Right lobe of liver (tissue), 6 donors: ENCODE measurements at regions of chr5 and their contacts with region 1.

Region 1: DNA sequence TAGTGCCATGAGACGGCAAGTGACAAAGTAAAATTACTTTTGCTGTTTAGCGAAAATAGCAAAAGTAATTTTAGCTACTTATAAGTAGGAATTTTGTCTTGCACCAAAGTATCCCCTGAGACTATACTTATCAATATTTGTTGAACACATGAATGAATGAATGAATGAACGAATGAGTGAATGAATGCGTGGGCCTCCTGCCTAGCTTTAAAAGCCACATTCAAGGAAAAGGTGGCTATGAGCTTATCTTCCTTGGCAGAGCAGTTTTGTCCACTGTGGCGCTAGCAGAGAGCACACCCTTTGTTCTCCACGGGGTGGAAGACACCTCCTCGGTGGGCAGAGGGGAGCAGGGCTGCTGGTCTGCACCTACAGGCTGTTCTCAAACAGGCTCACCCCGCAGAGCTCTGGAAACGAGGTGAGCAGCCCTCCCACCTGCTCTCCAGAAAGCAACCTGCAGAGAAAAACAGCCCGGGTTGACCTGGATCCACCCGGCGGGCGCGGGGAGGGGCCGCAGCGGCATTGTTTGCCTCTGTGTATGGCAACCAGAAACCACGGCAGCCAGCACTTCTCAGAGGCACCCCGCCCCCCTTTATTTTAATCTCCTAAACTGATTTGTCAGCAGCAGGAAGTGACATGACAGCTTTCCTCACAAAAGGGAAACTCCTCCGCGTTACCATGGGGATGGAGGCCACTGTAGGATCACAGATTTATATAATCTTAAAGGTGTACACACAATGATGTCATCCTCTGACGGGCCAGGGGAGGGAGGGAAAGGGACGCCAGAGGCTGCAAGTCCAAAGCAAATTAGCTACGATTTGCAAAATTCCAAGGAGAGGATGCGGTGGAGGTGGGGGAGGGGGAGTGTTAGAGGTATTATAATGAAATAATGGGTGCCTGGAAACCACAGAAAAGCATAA is 5.9 kb downstream of the DUSP1 start:
- DNase-seq: peak; percentile 92 to 97 (median 95)
- ATAC-seq: peak; percentile 48 to 76 (median 56)
- H3K4me3 ChIP-seq: peak overlapping the region; percentile 22 to 43 (median 22)
- H3K27ac ChIP-seq: peak overlapping the region; percentile 99 to 100 (median 99)
- H3K4me1 ChIP-seq: peaks cover 0 to 43% (median 4%) of the 10 kb centered on the region in 4 donors
- H3K27me3 ChIP-seq: no peaks in the 10 kb centered on the region
- CTCF ChIP-seq: no peak
- POLR2A ChIP-seq: peak; percentile 48

Region 2: DNA sequence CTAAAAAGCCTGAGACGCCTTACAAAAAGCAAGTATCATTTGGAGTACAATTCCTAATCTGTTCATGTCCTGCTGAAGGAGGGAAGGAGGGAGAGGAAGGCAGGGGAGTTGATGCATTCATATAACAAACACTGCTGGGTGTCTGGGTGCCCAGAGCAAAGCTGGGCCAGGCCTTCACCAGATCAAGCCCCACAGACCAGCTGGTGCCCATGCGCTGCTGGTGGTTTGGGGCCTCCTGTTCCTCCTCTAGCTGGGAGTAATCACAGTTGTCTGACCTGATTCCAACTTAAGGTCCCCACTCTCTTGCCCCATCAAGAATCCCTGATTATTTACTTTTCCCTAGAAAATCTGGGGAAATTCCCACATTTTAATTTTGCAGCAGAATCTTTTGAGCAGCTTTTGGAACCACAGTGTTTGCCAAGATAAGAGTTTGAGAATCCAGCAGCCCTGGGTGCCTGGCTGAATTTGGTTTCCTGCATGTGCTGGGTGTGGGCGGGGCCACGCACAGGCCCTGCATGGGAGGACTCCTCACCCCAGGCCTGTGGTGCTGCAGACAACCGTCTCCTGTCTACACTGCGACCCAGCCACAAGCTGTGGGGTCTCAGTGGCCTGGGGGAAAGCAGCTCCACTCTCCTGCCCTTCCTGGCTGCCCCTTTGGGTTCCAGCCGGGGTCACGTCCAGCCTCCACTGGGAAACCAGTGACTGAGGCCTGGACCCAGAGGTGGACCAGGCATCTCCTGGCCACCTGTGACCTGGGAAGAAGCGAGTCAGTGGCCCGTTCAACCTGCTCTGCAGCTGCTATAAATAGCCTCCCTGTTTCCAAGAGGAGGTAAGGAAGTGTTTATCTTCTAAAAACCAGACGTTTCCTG is 76.5 kb before region 1 on chr5:
- intact Hi-C with region 1: no loop called
- DNase-seq: peak in 1 of 3 donors; percentile 44
- ATAC-seq: peak; percentile 48 to 62 (median 52)
- H3K4me3 ChIP-seq: no peak overlapping the region
- H3K27ac ChIP-seq: peak overlapping the region in 1 of 3 donors; percentile 15
- H3K4me1 ChIP-seq: no peaks in the 10 kb centered on the region
- H3K27me3 ChIP-seq: no peaks in the 10 kb centered on the region
- CTCF ChIP-seq: no peak
- POLR2A ChIP-seq: no peak

Region 3: GRCh38 chr5:172724242-172725183 is 40.6 kb before region 1 on chr5:
- intact Hi-C with region 1: loop called (anchors 5 kb)
- DNase-seq: peak; percentile 53 to 80 (median 76)
- ATAC-seq: peak; percentile 70 to 82 (median 78)
- H3K4me3 ChIP-seq: peak overlapping the region in 1 of 3 donors; percentile 13
- H3K27ac ChIP-seq: peak overlapping the region; percentile 35 to 88 (median 80)
- H3K4me1 ChIP-seq: peaks cover 0 to 59% (median 27%) of the 10 kb centered on the region in 4 donors
- H3K27me3 ChIP-seq: no peaks in the 10 kb centered on the region
- CTCF ChIP-seq: no peak
- POLR2A ChIP-seq: no peak

Region 4: GRCh38 chr5:173328137-173328843 is 563.2 kb after region 1 on chr5 and contains the start of gene STC2:
- intact Hi-C with region 1: no loop called
- DNase-seq: peak in 1 of 3 donors; percentile 91
- ATAC-seq: peak; percentile 22 to 71 (median 46)
- H3K4me3 ChIP-seq: peak within 1 kb of the TSS; percentile 19 to 39 (median 26)
- H3K27ac ChIP-seq: peak within 1 kb of the TSS in 1 of 3 donors; percentile 26
- H3K4me1 ChIP-seq: peaks cover 0 to 20% (median 3%) of the 10 kb centered on the region in 4 donors
- H3K27me3 ChIP-seq: peaks cover 0 to 17% of the 10 kb centered on the region in 2 donors
- CTCF ChIP-seq: no peak
- POLR2A ChIP-seq: no peak
- total RNA-seq, gene STC2: 0.20 to 18.8 (median 3.4) TPM in 4 of 6 experiments, not detected in the others